ENCODE measurements at regions of chr14 and their contacts with region 1.

Region 1: GRCh38 chr14:69643443-69644164 is 32.2 kb downstream of the SUSD6 start:
- DNase-seq: peak; percentile 88
- H3K4me3 Mint-ChIP-seq: peak overlapping the region; percentile 54
- H3K27ac Mint-ChIP-seq: peak overlapping the region; percentile 99
- H3K4me1 Mint-ChIP-seq: peaks cover 54% of the 10 kb centered on the region
- H3K27me3 Mint-ChIP-seq: no peaks in the 10 kb centered on the region
- CTCF ChIP-seq: no peak

Region 2: DNA sequence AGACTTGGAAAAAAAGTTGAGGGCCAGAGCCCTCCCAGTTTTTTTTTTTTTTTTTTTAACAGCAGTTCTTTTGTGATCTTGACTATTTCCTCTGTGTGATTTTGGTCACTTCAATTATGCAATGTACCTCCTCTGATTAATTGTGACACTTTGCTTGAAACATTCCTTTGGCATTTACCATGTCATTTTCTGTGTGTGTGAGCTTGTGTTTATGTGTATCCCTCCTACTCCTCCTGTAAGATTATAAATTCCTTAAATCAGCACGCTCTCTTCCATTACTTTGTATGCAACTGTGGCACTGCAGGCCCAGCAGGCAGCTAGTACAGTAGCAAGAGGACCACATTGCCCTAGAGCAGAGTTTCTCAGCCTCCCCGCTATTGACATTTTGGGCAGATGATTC is 416.9 kb before region 1 on chr14:
- CTCF ChIA-PET with region 1: interaction called, 11 read pairs
- intact Hi-C with region 1: no loop called
- DNase-seq: no peak
- H3K4me3 Mint-ChIP-seq: no peak overlapping the region
- H3K27ac Mint-ChIP-seq: no peak overlapping the region
- H3K4me1 Mint-ChIP-seq: peaks cover 5% of the 10 kb centered on the region
- H3K27me3 Mint-ChIP-seq: no peaks in the 10 kb centered on the region
- CTCF ChIP-seq: no peak

Region 3: DNA sequence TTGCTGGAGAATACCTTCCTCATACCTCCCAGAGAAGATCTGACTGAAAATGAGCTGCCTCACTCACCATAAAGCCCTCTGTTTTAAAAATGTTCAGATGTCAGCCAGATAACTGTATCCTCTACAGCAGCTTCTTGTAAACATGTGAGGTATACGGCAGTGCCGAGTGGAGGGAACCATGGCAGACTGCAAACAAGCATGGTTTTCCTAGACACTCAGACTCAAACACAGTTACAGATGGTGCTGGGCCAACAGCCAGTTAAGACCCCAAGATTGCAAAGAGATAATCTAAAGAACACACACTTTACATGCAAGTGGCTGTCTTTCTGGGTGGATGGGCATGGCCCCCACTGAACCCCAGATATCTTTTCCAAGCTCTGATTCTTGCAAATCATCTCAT is 52.3 kb before region 1 on chr14:
- CTCF ChIA-PET with region 1: interaction called, 11 read pairs
- intact Hi-C with region 1: no loop called
- DNase-seq: no peak
- H3K4me3 Mint-ChIP-seq: no peak overlapping the region
- H3K27ac Mint-ChIP-seq: no peak overlapping the region
- H3K4me1 Mint-ChIP-seq: no peaks in the 10 kb centered on the region
- H3K27me3 Mint-ChIP-seq: no peaks in the 10 kb centered on the region
- CTCF ChIP-seq: no peak

Region 4: DNA sequence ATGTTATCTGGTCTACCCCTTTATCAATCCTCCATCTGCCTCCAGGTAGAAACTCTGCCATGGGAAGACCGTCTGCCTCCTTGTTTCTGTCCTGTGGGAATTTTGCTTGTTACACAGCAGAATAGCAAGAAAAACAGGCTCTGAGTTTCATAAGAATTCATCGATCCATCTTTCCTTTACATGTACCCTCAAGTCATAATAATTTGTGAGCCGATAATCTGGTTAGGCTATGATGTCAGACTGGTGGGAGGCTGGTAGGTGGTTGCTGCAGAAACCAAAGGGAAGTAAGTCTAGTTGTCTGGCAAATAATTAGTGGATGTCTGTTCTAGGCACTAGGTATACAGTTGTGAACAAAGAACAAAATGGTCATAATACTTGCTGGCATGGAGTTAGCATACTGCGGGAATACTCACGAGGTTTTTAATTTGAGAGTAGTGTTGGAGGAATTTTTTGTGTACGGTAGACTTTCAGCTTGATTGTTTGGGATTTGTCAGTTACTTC is 23.4 kb before region 1 on chr14:
- CTCF ChIA-PET with region 1: interaction called, 6 read pairs
- intact Hi-C with region 1: loop called (anchors 2 kb)
- DNase-seq: peak; percentile 70
- H3K4me3 Mint-ChIP-seq: peak overlapping the region; percentile 60
- H3K27ac Mint-ChIP-seq: peak overlapping the region; percentile 94
- H3K4me1 Mint-ChIP-seq: peaks cover 76% of the 10 kb centered on the region
- H3K27me3 Mint-ChIP-seq: no peaks in the 10 kb centered on the region
- CTCF ChIP-seq: no peak

Measured in Calu3 (cell line).